Left ventricle myocardium superior (tissue), 1 donor: ENCODE measurements at regions of chr17 and their contacts with region 1.

Region 1: DNA sequence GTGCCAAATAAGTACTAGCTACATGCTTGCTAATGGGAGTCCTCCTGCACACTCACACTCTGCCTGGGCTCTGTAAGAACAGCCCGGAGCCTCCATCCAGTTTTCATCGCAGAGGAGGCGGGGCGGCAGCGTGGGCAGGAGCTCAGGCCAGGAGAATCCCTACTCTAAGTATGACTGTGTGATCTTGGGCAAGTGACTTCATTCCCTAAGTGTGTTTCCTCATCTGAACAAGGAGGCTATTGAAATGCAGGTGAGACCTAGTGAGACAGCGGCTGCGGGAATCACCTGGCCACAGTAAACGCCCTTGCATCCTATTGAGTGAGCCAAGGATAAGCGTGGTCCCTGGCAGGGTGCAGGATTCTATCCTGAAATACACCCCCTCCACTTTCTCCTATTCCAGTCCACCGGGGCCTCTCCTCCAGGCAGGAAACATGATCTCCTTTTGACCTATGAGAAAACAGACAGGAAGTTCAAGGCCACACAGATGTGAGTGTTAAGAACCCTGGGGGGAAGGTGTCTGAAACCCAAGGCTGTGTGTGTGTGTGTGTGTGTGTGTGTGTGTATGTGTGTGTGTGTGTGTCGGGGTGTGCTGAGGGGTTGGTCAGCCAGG is 5.2 kb upstream of the RAI1 start:
- DNase-seq: no peak
- ATAC-seq: no peak

Region 2: DNA sequence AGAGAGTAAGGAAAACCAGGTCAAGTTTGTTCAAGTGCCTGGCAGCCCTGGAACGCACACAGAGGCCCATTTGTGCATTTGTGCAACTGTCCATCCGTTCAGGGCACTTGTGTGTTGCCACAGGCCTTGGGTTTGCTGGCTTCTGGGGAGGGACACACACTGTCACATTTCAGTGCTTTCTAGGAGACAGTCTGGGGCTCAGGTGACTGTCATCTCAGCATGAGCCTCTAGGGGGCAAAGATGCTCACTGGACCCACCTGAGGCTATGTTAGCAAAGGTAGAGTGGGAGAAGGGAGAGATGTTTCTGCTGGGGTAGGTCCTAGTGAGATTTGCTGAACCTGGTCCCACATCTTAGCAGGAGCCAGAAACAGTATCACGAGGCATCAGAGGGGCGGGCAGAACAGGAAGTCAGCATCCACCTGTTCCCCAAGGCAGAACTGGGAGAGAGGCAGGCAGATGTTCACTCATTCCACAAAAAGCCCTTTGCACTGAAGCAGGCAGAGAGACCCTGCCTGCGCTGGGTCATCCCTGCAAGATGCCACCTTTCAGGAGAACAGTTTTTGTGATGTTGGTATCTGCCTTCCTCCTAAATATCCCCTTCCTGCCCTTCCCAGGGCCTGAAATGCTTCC is 53.7 kb after region 1 on chr17:
- intact Hi-C with region 1: loop called (anchors 10 kb)
- DNase-seq: no peak
- ATAC-seq: peak; percentile 37

Region 3: DNA sequence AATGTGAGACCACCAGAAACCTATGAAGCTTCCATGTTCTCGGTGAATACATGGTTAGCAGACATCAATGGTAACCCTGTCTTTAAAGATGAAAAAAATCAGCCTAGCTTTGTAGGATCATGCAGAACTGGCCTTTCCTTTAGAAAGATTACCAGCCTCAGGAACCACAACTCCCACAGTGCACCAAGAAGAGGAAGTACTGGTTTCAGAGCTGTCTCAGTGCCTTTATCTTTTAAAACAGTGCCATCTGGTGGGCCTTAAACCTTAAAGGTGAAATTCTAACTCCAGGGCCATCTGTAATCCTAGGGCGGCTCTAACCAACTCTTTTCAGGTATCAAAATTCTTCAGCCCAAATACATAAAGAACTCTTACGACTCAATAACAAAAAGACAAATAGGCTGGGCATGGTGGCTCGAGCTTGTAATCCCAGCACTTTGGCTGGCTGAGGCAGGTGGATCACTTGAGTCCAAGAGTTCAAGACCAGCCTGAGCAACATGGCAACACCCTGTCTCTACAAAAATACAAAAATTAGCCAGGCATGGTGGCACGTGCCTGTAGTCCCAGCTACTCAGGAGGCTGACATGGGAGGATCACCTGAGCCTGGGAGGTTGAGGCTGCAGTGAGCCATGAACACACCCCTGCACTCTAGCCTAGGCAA is 357.5 kb after region 1 on chr17:
- intact Hi-C with region 1: loop called (anchors 5 kb)
- DNase-seq: no peak
- ATAC-seq: peak; percentile 76